ENCODE measurements at regions of chr3 and their contacts with region 1.

Region 1: DNA sequence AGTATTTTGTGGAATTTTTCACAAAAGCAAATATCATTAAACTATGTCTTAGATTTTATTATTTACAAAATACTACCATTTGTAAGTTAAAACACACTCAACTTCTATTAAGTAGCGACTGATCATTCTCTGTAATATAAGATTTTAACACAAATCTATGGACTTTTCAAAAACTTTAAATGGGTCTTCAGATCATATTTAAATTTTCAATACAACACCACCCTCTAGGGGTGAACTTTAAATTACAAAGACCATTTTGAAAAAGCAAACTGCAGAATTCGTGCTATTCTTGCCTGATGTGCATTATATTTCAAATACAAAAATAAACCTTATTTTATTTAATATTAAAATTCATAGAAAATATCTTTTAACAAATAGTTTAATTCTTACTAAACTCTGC is 8.2 kb upstream of the VGLL4 start:
- DNase-seq: no peak
- H3K4me3 ChIP-seq: no peak overlapping the region
- H3K27ac ChIP-seq: no peak overlapping the region
- H3K4me1 ChIP-seq: peaks cover 0 to 3% (median 1%) of the 10 kb centered on the region in 4 donors
- H3K27me3 ChIP-seq: no peaks in the 10 kb centered on the region
- CTCF ChIP-seq: peak; percentile 48 to 70 (median 59)
- EP300 ChIP-seq: no peak
- POLR2A ChIP-seq: no peak

Region 2: GRCh38 chr3:11236595-11237461 is 415.1 kb before region 1 on chr3:
- in situ Hi-C with region 1: loop called in 1 of 4 experiments (anchors 25 kb)
- intact Hi-C with region 1: no loop called
- DNase-seq: peak; percentile 84
- H3K4me3 ChIP-seq: no peak overlapping the region
- H3K27ac ChIP-seq: no peak overlapping the region
- H3K4me1 ChIP-seq: peaks cover 0 to 4% (median 0%) of the 10 kb centered on the region in 4 donors
- H3K27me3 ChIP-seq: no peaks in the 10 kb centered on the region
- CTCF ChIP-seq: peak; percentile 71 to 87 (median 77)
- EP300 ChIP-seq: no peak
- POLR2A ChIP-seq: no peak

Region 3: GRCh38 chr3:11379233-11379823 is 272.6 kb before region 1 on chr3:
- in situ Hi-C with region 1: loop called in 3 of 4 experiments (anchors 5 to 10 kb)
- intact Hi-C with region 1: loop called (anchors 2 kb)
- DNase-seq: no peak
- H3K4me3 ChIP-seq: no peak overlapping the region
- H3K27ac ChIP-seq: peak overlapping the region in 3 of 4 donors; percentile 1 to 40 (median 37)
- H3K4me1 ChIP-seq: peaks cover 0 to 11% (median 3%) of the 10 kb centered on the region in 4 donors
- H3K27me3 ChIP-seq: no peaks in the 10 kb centered on the region
- CTCF ChIP-seq: peak; percentile 55 to 69 (median 58)
- EP300 ChIP-seq: no peak
- POLR2A ChIP-seq: no peak

Region 4: DNA sequence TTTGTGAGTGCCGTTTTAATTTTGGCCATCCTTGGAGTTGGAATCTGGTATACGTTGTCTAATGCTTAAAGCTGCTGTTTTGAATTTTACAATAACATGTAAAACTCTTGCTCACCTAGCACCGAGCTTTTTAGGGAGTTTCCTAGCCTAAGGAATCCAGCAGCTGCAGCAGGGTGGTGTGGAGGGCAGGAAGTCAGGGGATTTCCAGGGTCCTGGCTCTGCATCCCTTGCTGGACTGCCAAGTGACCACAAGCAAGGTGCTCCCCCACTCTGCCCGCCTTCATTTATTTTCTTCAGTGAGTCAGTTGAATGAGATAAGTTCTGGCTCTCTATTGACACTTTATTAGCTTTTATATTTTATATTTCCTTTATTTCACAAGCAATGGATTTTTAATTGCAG is 266.0 kb before region 1 on chr3:
- in situ Hi-C with region 1: loop called (anchors 5 to 10 kb)
- intact Hi-C with region 1: no loop called
- DNase-seq: no peak
- H3K4me3 ChIP-seq: no peak overlapping the region
- H3K27ac ChIP-seq: peak overlapping the region in 1 of 4 donors; percentile 58
- H3K4me1 ChIP-seq: peaks cover 10 to 26% (median 15%) of the 10 kb centered on the region in 4 donors
- H3K27me3 ChIP-seq: no peaks in the 10 kb centered on the region
- CTCF ChIP-seq: no peak
- EP300 ChIP-seq: no peak
- POLR2A ChIP-seq: no peak

Region 5: GRCh38 chr3:11719406-11720230 is 67.7 kb after region 1 on chr3:
- in situ Hi-C with region 1: no loop called
- intact Hi-C with region 1: loop called (anchors 2 kb)
- DNase-seq: peak; percentile 96
- H3K4me3 ChIP-seq: peak overlapping the region; percentile 61 to 95 (median 76)
- H3K27ac ChIP-seq: peak overlapping the region; percentile 91 to 98 (median 96)
- H3K4me1 ChIP-seq: peaks cover 8 to 37% (median 20%) of the 10 kb centered on the region in 4 donors
- H3K27me3 ChIP-seq: no peaks in the 10 kb centered on the region
- CTCF ChIP-seq: no peak
- EP300 ChIP-seq: peak; percentile 55
- POLR2A ChIP-seq: peak; percentile 80

Region 6: DNA sequence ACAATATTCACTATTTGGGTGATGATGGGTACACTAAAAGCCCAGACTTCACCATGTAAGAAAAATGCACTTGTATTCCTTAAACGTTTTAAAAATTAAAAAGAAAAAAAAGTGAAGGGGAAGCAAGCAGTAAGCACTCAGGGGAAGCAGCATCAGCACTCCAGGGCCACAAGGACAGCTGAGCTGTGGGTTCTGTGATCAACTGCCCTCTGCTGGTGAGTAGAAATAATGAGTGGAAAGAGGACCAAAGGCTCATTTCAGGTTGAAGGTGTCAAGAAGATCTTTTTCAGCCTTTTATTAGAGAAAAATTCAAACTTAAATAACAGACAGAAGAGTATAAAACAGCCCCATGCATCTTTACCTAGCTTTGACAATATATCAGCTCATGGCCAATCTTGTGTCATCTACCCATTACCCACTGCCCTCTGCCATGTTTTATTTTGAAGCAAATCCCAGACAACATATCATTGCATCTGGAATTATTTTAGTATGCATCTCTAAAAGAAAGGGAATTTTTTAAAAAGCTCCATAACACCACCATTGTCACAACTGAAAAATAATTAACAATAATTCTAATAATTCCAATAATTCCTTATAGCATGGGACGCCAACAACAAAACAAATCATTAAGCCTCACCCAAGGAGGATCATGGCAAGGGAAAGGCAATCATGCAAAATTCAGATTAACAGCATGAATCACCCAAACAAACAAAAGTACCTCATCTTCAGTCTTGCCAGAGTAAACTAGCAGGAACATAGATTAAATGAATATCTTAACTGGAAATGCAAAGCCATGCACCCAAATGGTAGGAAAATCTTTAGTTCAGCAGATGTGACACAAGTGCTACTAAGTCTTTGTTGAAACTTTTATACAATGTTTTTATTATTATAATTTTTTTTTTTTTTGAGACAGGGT is 152.3 kb after region 1 on chr3:
- in situ Hi-C with region 1: loop called in 1 of 4 experiments (anchors 25 kb)
- intact Hi-C with region 1: loop called (anchors 10 kb)
- DNase-seq: peak; percentile 26
- H3K4me3 ChIP-seq: no peak overlapping the region
- H3K27ac ChIP-seq: no peak overlapping the region
- H3K4me1 ChIP-seq: peaks cover 0 to 10% (median 2%) of the 10 kb centered on the region in 4 donors
- H3K27me3 ChIP-seq: no peaks in the 10 kb centered on the region
- CTCF ChIP-seq: peak; percentile 64 to 76 (median 73)
- EP300 ChIP-seq: no peak
- POLR2A ChIP-seq: no peak